ENCODE measurements at regions of chr13 and their contacts with region 1.

Region 1: GRCh38 chr13:35720690-35721554 is 244.4 kb upstream of the MAB21L1 start:
- DNase-seq: peak; percentile 53
- H3K4me3 Mint-ChIP-seq: no peak overlapping the region
- H3K27ac Mint-ChIP-seq: no peak overlapping the region
- H3K4me1 Mint-ChIP-seq: peaks cover 1% of the 10 kb centered on the region
- H3K27me3 Mint-ChIP-seq: peaks cover 17% of the 10 kb centered on the region

Region 2: DNA sequence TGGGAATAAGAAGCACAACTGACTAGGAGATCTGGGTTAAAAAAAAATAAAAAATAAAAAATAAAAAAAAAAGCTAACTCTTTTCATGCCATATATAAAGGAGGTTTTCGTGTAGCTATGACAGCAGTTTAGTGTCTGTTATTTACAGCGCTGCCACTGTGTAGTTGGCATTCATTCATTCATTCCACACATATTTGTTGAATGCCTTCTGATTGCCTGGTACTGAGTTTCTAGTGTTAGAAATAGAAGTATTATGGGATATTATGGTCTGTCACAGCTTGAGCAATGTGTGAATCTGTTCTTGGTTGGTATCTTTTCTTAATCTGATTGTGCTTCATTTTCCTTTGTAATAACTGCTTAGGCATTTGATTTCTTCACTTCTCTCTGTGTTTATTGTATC is 541.4 kb before region 1 on chr13:
- CTCF ChIA-PET with region 1: no interaction called
- intact Hi-C with region 1: loop called (anchors 5 kb)
- DNase-seq: no peak
- H3K4me3 Mint-ChIP-seq: no peak overlapping the region
- H3K27ac Mint-ChIP-seq: no peak overlapping the region
- H3K4me1 Mint-ChIP-seq: no peaks in the 10 kb centered on the region
- H3K27me3 Mint-ChIP-seq: no peaks in the 10 kb centered on the region

Region 3: DNA sequence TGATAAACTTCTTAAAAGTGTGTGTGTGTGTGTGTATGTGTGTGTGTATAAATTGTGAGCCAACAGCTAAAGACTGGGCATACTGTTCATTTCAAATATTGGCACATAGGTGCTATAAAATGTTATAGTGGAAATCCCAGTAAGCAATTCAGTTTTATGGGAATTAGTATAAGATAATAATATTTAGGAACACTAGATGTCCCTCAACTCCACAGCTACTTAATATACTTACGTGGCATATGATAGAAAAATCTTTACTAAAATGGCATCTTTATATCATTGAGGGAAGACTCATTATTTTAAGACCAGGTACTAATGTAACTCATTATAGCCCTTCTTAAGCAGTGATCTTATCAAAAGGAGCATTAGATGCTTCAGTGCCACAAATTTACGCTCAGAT is 510.7 kb before region 1 on chr13:
- CTCF ChIA-PET with region 1: no interaction called
- intact Hi-C with region 1: loop called (anchors 2 kb)
- DNase-seq: no peak
- H3K4me3 Mint-ChIP-seq: no peak overlapping the region
- H3K27ac Mint-ChIP-seq: no peak overlapping the region
- H3K4me1 Mint-ChIP-seq: no peaks in the 10 kb centered on the region
- H3K27me3 Mint-ChIP-seq: no peaks in the 10 kb centered on the region

Region 4: DNA sequence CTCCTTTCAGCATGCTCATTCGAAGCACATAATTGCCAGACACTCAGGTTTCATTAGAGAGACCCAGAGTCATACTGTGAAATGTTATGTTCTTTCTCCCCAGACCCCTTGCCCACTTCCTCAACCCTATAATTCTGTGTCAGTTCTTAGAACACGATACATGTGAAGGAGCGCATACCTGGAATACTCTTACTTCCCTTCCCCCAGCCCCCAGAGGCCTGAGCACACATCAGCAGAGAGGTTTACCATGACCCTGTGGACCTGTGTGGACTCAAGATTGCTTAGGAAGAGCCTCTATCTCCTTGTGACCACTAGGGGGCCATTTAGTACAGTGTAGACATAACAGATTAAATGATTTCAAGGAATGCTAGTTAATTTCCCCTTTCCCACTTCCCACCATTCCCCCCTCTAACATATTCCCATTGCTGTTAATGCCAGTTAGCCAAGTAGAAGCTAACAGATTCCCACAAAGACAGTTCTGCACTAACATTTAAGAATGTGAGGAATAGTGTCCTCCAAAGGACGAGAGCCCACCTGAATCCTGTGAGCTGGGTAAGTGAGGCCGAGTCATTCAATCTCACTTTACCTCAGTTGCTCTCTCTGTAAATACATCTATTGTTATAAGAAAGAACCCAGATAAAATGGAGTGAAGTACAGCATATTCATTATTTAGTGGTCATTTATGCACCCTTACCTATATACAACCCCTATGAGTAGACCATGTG is 90.2 kb before region 1 on chr13:
- CTCF ChIA-PET with region 1: no interaction called
- intact Hi-C with region 1: loop called (anchors 1 kb)
- DNase-seq: no peak
- H3K4me3 Mint-ChIP-seq: no peak overlapping the region
- H3K27ac Mint-ChIP-seq: no peak overlapping the region
- H3K4me1 Mint-ChIP-seq: no peaks in the 10 kb centered on the region
- H3K27me3 Mint-ChIP-seq: no peaks in the 10 kb centered on the region

Region 5: DNA sequence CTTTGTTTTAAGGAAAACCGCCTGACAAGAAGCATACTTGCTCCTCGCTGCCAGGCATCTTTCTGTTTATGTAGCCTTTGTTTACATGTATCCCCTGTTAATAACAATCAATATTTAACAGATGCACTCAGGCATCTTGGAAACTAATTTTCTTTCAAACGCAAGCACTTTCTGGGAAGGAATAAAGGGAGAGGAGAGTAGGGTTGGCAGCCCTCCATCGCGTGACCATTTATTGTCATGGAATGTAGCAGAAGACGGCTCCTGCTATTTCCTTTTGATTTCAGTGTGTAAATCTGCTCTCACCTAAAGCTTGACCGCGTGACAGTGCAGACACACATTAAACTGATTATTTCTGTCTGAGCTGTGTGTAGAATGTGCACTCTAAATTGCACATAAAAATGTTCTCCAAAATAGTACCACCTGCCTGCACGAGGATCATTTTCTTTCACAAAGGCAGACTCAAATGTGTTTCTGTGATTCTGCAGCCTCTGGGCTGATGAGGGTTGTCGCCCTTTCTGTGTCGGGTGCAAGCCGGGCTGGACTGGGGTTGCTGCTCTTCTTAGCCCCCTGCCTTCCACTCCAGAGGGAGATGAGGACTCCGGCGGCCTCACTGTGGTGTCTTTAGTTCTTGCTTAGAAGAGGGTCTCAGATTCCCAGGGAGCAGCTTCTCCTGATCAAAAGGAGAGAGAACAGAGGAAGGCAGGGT is 21.0 kb before region 1 on chr13:
- CTCF ChIA-PET with region 1: no interaction called
- intact Hi-C with region 1: no loop called
- DNase-seq: no peak
- H3K4me3 Mint-ChIP-seq: no peak overlapping the region
- H3K27ac Mint-ChIP-seq: no peak overlapping the region
- H3K4me1 Mint-ChIP-seq: no peaks in the 10 kb centered on the region
- H3K27me3 Mint-ChIP-seq: peaks cover 22% of the 10 kb centered on the region